ENCODE measurements at regions of chr17 and their contacts with region 1.

Region 1: GRCh38 chr17:65556014-65556909 is 5.2 kb downstream of the AXIN2 start:
- DNase-seq: peak in 1 of 2 experiments; percentile 43
- H3K4me3 ChIP-seq: no peak overlapping the region
- H3K27ac ChIP-seq: no peak overlapping the region
- H3K4me1 ChIP-seq: no peaks in the 10 kb centered on the region; the same call in 1 of the 2 replicates
- H3K27me3 ChIP-seq: no peaks in the 10 kb centered on the region
- CTCF ChIP-seq: peak; percentile 88

Region 2: DNA sequence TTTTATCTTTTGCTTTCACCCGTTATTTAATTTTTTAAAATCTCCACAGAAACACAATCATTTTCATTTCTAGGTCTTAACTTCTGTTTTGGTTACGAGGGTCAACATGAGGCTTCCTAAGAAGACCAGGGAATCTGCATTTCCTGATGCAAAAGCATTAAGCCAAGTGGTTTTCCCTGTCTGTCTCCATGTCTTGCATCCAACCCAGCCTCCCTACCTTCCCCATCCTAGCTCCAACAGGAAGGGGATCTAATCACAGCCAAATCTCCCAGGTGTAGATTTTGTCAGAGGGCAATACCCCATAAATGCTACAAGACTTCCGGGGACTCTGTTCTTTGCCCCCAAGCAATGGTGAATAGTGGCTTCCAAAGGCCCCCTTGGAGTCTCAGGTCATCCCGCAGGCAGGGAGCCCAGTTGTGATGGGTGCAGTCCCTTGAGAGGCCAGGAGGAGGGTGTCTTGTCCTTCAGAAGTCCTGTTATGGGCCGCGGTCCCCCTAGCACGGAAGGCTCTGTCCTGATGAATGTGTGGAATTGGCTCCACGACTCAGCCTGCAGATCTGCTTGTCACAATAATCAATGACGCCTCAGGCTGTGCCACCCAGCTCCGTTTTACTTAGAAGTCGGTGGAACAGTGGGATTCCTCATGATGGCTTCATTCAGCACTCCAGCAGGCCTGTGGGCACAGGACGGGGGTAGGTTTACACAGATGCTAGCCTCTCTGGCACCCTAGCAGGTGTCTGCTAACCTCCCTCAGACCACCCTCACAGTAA is 278.0 kb before region 1 on chr17:
- CTCF ChIA-PET with region 1: no interaction called
- POLR2A ChIA-PET with region 1: no interaction called
- intact Hi-C with region 1: loop called (anchors 5 kb)
- DNase-seq: peak; percentile 20 to 46
- H3K4me3 ChIP-seq: no peak overlapping the region
- H3K27ac ChIP-seq: no peak overlapping the region
- H3K4me1 ChIP-seq: no peaks in the 10 kb centered on the region
- H3K27me3 ChIP-seq: no peaks in the 10 kb centered on the region
- CTCF ChIP-seq: peak; percentile 82

Region 3: DNA sequence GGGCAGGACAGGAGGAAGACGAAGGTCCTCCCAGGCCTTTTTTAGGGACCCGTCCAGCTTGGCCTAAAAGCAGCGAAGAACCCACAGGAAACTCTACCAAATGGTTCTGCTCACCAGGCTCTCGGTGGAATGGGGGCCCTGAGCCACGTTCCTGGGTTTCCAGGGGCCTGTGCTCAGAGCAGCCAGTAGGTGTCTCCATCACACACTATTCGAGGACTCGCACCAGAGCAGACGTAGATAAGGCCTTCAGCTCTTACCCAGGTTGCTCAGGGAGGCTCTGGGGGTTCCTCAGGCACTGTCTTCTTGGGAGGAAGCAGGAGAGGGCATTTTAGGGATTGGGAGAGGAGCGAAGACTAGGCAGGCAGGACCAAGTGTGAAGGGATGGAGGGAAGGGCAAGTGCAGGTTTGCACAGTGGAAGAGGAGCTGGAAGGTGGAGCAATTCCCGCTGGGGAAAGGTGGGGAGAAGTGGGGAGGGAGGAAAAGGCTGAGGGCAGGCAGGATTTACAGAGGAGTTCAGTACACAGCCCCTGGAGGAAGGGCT is 262.0 kb before region 1 on chr17:
- CTCF ChIA-PET with region 1: no interaction called
- POLR2A ChIA-PET with region 1: no interaction called
- intact Hi-C with region 1: loop called (anchors 5 kb)
- DNase-seq: peak; percentile 32 to 40
- H3K4me3 ChIP-seq: no peak overlapping the region
- H3K27ac ChIP-seq: no peak overlapping the region
- H3K4me1 ChIP-seq: no peaks in the 10 kb centered on the region
- H3K27me3 ChIP-seq: no peaks in the 10 kb centered on the region
- CTCF ChIP-seq: peak; percentile 77

Region 4: DNA sequence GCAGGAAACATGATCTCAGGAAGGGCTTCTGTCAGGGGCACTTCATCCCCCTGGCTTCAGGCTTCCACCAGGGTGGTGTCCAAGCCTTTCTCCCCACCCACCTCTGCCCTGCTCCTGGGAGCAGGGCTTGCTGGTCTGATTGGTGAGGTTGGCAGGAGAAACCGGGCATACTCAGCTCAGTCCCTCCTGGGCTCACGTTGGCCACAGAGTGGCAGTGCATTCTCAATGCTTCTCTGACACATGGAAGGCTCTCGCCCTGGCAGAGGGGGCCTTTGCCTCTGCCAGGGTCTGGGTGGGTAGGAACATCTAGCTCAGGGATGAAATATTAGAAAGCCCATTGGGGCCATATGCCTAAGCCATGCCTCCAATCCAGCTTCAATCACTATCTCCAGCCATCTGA is 137.6 kb before region 1 on chr17:
- CTCF ChIA-PET with region 1: no interaction called
- POLR2A ChIA-PET with region 1: no interaction called
- intact Hi-C with region 1: no loop called
- DNase-seq: no peak
- H3K4me3 ChIP-seq: no peak overlapping the region
- H3K27ac ChIP-seq: no peak overlapping the region
- H3K4me1 ChIP-seq: no peaks in the 10 kb centered on the region; the same call in 1 of the 2 replicates
- H3K27me3 ChIP-seq: no peaks in the 10 kb centered on the region
- CTCF ChIP-seq: no peak

Region 5: GRCh38 chr17:65609749-65610148 is 53.5 kb after region 1 on chr17:
- CTCF ChIA-PET with region 1: no interaction called
- POLR2A ChIA-PET with region 1: no interaction called
- intact Hi-C with region 1: no loop called
- DNase-seq: no peak
- H3K4me3 ChIP-seq: no peak overlapping the region
- H3K27ac ChIP-seq: no peak overlapping the region
- H3K4me1 ChIP-seq: no peaks in the 10 kb centered on the region
- H3K27me3 ChIP-seq: no peaks in the 10 kb centered on the region
- CTCF ChIP-seq: no peak

Region 6: DNA sequence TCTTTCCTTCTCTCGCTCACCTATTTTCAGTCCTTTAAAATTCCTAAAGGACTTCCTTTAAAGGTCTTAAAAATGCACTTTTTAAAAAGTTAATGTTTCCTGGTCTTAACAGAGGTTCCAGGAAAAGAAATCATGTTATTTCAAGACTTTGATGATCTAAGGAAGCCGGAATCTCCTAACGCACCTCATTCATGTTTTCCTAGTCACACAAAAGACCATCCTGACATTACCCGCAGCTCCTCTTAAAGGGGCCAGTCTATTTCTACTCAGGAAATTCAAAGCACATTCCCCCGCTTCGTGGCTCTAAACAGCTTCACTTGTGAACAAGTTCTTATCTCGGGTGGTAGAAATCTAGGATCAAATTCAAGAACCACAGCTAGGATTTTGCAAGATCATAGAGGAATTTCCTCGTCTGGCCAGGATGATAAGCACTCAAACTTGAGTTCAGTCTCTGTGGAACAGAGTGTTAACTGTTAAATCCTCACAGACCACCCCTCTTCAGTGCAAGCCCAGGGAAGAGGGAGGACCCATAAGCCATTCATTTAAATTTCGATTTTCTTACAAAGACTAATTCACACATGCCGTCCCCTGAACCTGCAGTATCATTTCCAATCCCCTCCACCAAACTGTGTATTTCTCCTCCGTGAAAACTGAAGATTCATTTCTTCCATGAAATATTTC is 142.3 kb after region 1 on chr17:
- CTCF ChIA-PET with region 1: interaction called, 12 read pairs
- POLR2A ChIA-PET with region 1: no interaction called
- intact Hi-C with region 1: no loop called
- DNase-seq: no peak
- H3K4me3 ChIP-seq: no peak overlapping the region
- H3K27ac ChIP-seq: no peak overlapping the region
- H3K4me1 ChIP-seq: no peaks in the 10 kb centered on the region
- H3K27me3 ChIP-seq: no peaks in the 10 kb centered on the region
- CTCF ChIP-seq: no peak